ENCODE measurements at regions of chr20 and their contacts with region 1.

Region 1: GRCh38 chr20:56468316-56469082 is at the start of gene RTF2:
- DNase-seq: peak; percentile 89
- ATAC-seq: peak; percentile 99
- H3K4me3 ChIP-seq: peak within 1 kb of the TSS; percentile 90 to 97 (median 96)
- H3K27ac ChIP-seq: peak within 1 kb of the TSS; percentile 53
- H3K4me1 ChIP-seq: peaks cover 29% of the 10 kb centered on the region
- H3K27me3 ChIP-seq: no peaks in the 10 kb centered on the region; a peak in 2 of 5 replicates
- CTCF ChIP-seq: peak; percentile 26; the same call in 1 of the 2 replicates
- EP300 ChIP-seq: no peak
- POLR2A ChIP-seq: peak; percentile 88 to 89
- RAD21 ChIP-seq: peak; percentile 35; the same call in 1 of the 2 replicates
- total RNA-seq, gene RTF2: 142 and 202 TPM in 2 replicates

Region 2: GRCh38 chr20:55805138-55805537 is 663.4 kb before region 1 on chr20:
- CTCF ChIA-PET with region 1: no interaction called
- POLR2A ChIA-PET with region 1: no interaction called
- in situ Hi-C with region 1: no loop called
- intact Hi-C with region 1: no loop called
- DNase-seq: no peak
- ATAC-seq: no peak
- H3K4me3 ChIP-seq: no peak overlapping the region
- H3K27ac ChIP-seq: no peak overlapping the region
- H3K4me1 ChIP-seq: no peaks in the 10 kb centered on the region
- H3K27me3 ChIP-seq: no peaks in the 10 kb centered on the region
- CTCF ChIP-seq: no peak
- EP300 ChIP-seq: no peak
- POLR2A ChIP-seq: no peak
- RAD21 ChIP-seq: no peak

Region 3: GRCh38 chr20:56411759-56412472 is 56.6 kb before region 1 on chr20 and contains the start of gene CASS4:
- CTCF ChIA-PET with region 1: no interaction called
- POLR2A ChIA-PET with region 1: interaction called, 11 read pairs
- in situ Hi-C with region 1: no loop called
- intact Hi-C with region 1: no loop called
- DNase-seq: peak; percentile 68
- ATAC-seq: peak; percentile 90
- H3K4me3 ChIP-seq: peak within 1 kb of the TSS; percentile 37 to 58 (median 55)
- H3K27ac ChIP-seq: peak within 1 kb of the TSS; percentile 59
- H3K4me1 ChIP-seq: peaks cover 32% of the 10 kb centered on the region
- H3K27me3 ChIP-seq: no peaks in the 10 kb centered on the region
- CTCF ChIP-seq: no peak
- EP300 ChIP-seq: peak in 1 of 2 experiments; percentile 75; a peak in 3 of 4 replicates
- POLR2A ChIP-seq: peak in 1 of 2 experiments; percentile 16; a peak in 1 of 4 replicates
- RAD21 ChIP-seq: no peak
- total RNA-seq, gene CASS4: 0.38 and 0.49 TPM in 2 replicates

Region 4: DNA sequence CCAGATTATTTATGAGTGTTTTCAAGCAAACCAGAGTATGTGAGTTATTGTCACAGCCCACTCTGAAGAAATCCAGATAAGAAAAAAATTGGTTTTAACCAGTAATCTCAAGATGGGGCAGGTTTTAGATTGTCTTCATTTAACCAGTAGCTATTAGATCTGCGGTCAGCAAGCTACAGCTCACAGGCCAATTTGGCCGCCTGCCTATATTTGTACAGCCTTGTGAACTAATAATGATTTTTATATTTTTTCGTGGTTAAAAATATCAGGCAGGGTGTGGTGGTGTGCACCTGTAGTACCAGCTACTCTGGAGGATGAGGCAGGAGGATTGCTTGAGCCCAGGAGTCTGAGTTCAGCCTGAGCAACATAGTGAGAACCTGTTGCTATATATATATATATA is 69.5 kb after region 1 on chr20:
- CTCF ChIA-PET with region 1: no interaction called
- POLR2A ChIA-PET with region 1: no interaction called
- in situ Hi-C with region 1: loop called (anchors 10 kb)
- intact Hi-C with region 1: no loop called
- DNase-seq: no peak
- ATAC-seq: no peak
- H3K4me3 ChIP-seq: no peak overlapping the region
- H3K27ac ChIP-seq: no peak overlapping the region
- H3K4me1 ChIP-seq: no peaks in the 10 kb centered on the region
- H3K27me3 ChIP-seq: peaks cover 0 to 5% of the 10 kb centered on the region in 2 experiments; a peak in 1 of 5 replicates
- CTCF ChIP-seq: no peak
- EP300 ChIP-seq: no peak
- POLR2A ChIP-seq: no peak
- RAD21 ChIP-seq: no peak